ENCODE measurements at regions of chr13 and their contacts with region 1.

Region 1: GRCh38 chr13:52348983-52349780 is 56.8 kb downstream of the THSD1 start:
- DNase-seq: peak; percentile 15
- ATAC-seq: peak; percentile 73; the same call in 1 of the 2 replicates
- H3K4me3 ChIP-seq: no peak overlapping the region
- H3K27ac ChIP-seq: peak overlapping the region; percentile 36
- H3K4me1 ChIP-seq: peaks cover 5% of the 10 kb centered on the region
- H3K27me3 ChIP-seq: no peaks in the 10 kb centered on the region
- CTCF ChIP-seq: no peak

Region 2: DNA sequence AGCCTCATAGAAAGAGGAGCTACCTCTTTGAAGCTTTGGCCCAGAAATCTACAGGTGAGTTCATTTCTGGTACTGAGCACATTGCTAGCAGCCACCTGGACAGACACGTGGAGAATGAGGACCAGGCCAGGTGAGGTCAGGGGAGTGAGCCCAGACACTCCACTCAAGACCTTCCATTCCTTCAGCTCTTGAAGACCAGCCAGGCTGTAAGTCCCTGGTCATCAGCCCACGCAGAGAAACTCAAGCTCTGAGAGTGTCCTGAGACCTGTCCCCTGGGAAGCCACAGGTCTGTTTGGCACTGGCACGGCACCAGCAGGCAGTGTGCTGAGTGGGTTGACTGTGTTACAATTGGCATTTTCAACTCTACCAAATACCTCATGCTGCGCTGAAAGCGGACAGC is 1265.5 kb before region 1 on chr13:
- CTCF ChIA-PET with region 1: no interaction called
- POLR2A ChIA-PET with region 1: no interaction called
- in situ Hi-C with region 1: no loop called
- intact Hi-C with region 1: no loop called
- DNase-seq: no peak
- ATAC-seq: no peak
- H3K4me3 ChIP-seq: no peak overlapping the region
- H3K27ac ChIP-seq: no peak overlapping the region
- H3K4me1 ChIP-seq: no peaks in the 10 kb centered on the region
- H3K27me3 ChIP-seq: no peaks in the 10 kb centered on the region
- CTCF ChIP-seq: no peak

Region 3: DNA sequence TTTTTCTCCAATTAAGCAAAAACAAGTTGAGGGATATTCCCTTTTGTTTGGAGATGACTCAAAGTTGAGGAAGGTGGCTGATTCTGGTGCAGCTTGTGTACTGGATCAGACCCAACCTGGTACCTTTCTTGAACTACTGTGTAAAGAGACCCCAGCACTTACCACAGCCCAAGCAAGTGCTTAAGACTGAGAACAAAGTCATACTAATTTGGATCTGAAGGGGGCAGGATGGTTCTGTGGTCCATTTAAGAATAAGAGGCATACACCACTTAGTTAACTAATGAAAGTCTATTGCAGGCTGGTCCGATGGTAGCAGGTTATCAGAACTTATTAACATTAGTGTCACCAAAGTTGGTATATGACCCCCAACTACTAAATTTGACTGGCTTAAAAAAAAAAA is 50.5 kb after region 1 on chr13:
- CTCF ChIA-PET with region 1: no interaction called
- POLR2A ChIA-PET with region 1: interaction called, 15 read pairs
- in situ Hi-C with region 1: no loop called
- intact Hi-C with region 1: no loop called
- DNase-seq: no peak
- ATAC-seq: no peak
- H3K4me3 ChIP-seq: no peak overlapping the region
- H3K27ac ChIP-seq: no peak overlapping the region
- H3K4me1 ChIP-seq: no peaks in the 10 kb centered on the region
- H3K27me3 ChIP-seq: no peaks in the 10 kb centered on the region
- CTCF ChIP-seq: no peak; the same call in 1 of the 2 replicates

Region 4: GRCh38 chr13:52428295-52428694 is 79.1 kb after region 1 on chr13:
- CTCF ChIA-PET with region 1: no interaction called
- POLR2A ChIA-PET with region 1: no interaction called
- in situ Hi-C with region 1: no loop called
- intact Hi-C with region 1: no loop called
- DNase-seq: no peak
- ATAC-seq: peak; percentile 84
- H3K4me3 ChIP-seq: no peak overlapping the region
- H3K27ac ChIP-seq: no peak overlapping the region
- H3K4me1 ChIP-seq: peaks cover 12% of the 10 kb centered on the region
- H3K27me3 ChIP-seq: no peaks in the 10 kb centered on the region
- CTCF ChIP-seq: no peak

Region 5: GRCh38 chr13:52450012-52450792 is 101.0 kb after region 1 on chr13 and contains the start of gene VPS36:
- CTCF ChIA-PET with region 1: no interaction called
- POLR2A ChIA-PET with region 1: no interaction called
- in situ Hi-C with region 1: no loop called
- intact Hi-C with region 1: loop called (anchors 2 kb)
- DNase-seq: peak; percentile 60
- ATAC-seq: peak; percentile 88
- H3K4me3 ChIP-seq: peak within 1 kb of the TSS; percentile 79 to 86
- H3K27ac ChIP-seq: peak within 1 kb of the TSS; percentile 91
- H3K4me1 ChIP-seq: peaks cover 22% of the 10 kb centered on the region
- H3K27me3 ChIP-seq: no peaks in the 10 kb centered on the region
- CTCF ChIP-seq: peak; percentile 99
- total RNA-seq, gene VPS36: 32.1 TPM

Region 6: GRCh38 chr13:52947921-52948373 is 598.8 kb after region 1 on chr13:
- CTCF ChIA-PET with region 1: no interaction called
- POLR2A ChIA-PET with region 1: no interaction called
- in situ Hi-C with region 1: no loop called
- intact Hi-C with region 1: no loop called
- DNase-seq: no peak
- ATAC-seq: no peak
- H3K4me3 ChIP-seq: no peak overlapping the region
- H3K27ac ChIP-seq: no peak overlapping the region
- H3K4me1 ChIP-seq: no peaks in the 10 kb centered on the region
- H3K27me3 ChIP-seq: no peaks in the 10 kb centered on the region
- CTCF ChIP-seq: no peak

Region 7: DNA sequence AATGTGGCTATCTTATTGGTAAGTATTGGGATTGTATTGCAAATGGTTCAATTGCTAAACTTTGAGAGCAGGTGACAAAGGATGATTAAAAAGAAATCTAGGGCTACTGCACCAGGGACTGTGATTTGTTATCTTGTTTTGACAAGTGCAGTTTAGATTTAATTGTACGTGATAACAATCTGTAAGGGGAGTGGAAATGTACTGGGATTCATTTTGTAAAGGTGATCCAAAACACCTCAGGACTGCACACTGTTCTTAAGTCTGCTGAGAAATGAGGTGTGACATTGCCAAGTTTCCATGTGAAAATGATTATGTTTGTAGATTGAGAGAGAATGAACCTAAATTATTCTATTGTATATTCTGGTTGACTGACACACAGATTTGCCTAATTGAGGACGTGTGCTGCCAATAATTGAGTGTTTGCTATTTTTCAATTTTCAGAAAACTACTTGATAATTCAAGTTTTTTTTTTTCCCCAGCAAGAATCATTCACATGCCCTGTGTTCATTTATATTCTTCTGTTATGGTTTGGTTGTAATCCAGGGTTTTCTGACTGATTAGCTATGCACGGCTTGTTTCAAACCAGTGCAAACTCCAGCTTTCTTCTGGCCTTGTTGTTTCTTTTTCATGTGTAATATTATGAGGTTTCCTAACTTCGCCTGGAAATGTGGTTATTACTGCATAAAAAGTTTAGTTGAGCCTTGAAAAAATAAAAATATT is 987.4 kb after region 1 on chr13:
- CTCF ChIA-PET with region 1: no interaction called
- POLR2A ChIA-PET with region 1: no interaction called
- in situ Hi-C with region 1: no loop called
- intact Hi-C with region 1: no loop called
- DNase-seq: no peak
- ATAC-seq: no peak
- H3K4me3 ChIP-seq: no peak overlapping the region
- H3K27ac ChIP-seq: no peak overlapping the region
- H3K4me1 ChIP-seq: no peaks in the 10 kb centered on the region
- H3K27me3 ChIP-seq: no peaks in the 10 kb centered on the region
- CTCF ChIP-seq: no peak

Region 8: GRCh38 chr13:54305377-54305776 is 1956.2 kb after region 1 on chr13:
- CTCF ChIA-PET with region 1: no interaction called
- POLR2A ChIA-PET with region 1: interaction called, 11 read pairs
- in situ Hi-C with region 1: no loop called
- intact Hi-C with region 1: no loop called
- DNase-seq: no peak
- ATAC-seq: no peak
- H3K4me3 ChIP-seq: no peak overlapping the region
- H3K27ac ChIP-seq: no peak overlapping the region
- H3K4me1 ChIP-seq: no peaks in the 10 kb centered on the region
- H3K27me3 ChIP-seq: no peaks in the 10 kb centered on the region
- CTCF ChIP-seq: no peak